ENCODE measurements at regions of chr1 and their contacts with region 1.

Region 1: GRCh38 chr1:941588-942383 is 17.3 kb downstream of the NOC2L start:
- DNase-seq: peak in 1 of 2 donors; percentile 85
- H3K4me3 ChIP-seq: peak overlapping the region; percentile 50 to 62
- H3K27ac ChIP-seq: peak overlapping the region; percentile 56 to 70
- H3K4me1 ChIP-seq: peaks cover 13 to 21% of the 10 kb centered on the region in 2 donors
- H3K27me3 ChIP-seq: peaks cover 12% of the 10 kb centered on the region
- CTCF ChIP-seq: no peak

Region 2: GRCh38 chr1:869499-870244 is 72.1 kb before region 1 on chr1:
- intact Hi-C with region 1: no loop called
- DNase-seq: peak in 1 of 2 donors; percentile 77
- H3K4me3 ChIP-seq: peak overlapping the region in 1 of 2 donors; percentile 39
- H3K27ac ChIP-seq: no peak overlapping the region
- H3K4me1 ChIP-seq: no peaks in the 10 kb centered on the region
- H3K27me3 ChIP-seq: no peaks in the 10 kb centered on the region
- CTCF ChIP-seq: peak; percentile 52 to 74 (median 62)

Region 3: DNA sequence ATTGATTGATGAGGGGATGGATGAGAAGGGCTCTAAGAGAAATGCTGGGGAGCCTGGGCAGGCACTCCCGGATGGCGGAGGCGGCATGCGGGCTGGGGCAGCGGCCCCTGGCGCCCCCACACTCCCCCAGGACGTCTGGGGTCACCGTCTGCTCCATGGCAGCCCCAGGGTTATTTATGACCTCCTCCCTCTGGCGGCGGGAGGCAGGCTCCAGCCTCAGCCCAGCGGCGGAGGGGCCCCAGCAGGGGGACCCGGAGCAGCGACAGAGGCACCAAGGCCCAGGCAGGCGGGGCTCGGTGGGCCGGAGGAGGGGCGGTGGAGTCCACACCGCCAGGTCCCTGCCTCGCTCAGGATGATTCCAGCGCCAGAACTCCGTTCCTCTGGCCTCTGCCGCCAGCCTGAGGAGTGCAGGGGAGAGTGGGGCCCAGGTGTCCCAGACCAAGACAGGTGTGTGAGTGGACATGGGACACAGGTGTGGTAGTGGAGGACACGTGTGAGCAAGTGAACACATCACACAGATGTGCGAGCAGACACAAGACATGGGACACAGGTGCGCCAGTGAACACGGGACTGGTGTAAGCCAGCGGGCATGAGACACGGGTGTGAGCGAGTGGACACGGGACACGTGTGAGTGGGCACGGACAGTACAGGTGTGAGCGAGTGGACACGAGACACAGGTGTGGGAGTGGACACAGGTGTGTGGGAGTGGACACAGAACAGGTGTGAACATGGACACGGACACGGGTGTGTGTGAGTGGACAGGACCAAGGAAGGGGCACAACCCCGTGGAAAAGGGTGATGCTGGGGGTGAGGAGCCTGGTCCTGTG is 20.6 kb before region 1 on chr1:
- intact Hi-C with region 1: loop called (anchors 1 kb)
- DNase-seq: peak in 1 of 2 donors; percentile 79
- H3K4me3 ChIP-seq: peak overlapping the region in 1 of 2 donors; percentile 28
- H3K27ac ChIP-seq: no peak overlapping the region
- H3K4me1 ChIP-seq: peaks cover 22 to 32% of the 10 kb centered on the region in 2 donors
- H3K27me3 ChIP-seq: peaks cover 2% of the 10 kb centered on the region
- CTCF ChIP-seq: peak; percentile 45 to 67 (median 61)

Region 4: GRCh38 chr1:1290238-1290731 is 348.5 kb after region 1 on chr1:
- intact Hi-C with region 1: no loop called
- DNase-seq: no peak
- H3K4me3 ChIP-seq: no peak overlapping the region
- H3K27ac ChIP-seq: no peak overlapping the region
- H3K4me1 ChIP-seq: peaks cover 3 to 4% of the 10 kb centered on the region in 2 donors
- H3K27me3 ChIP-seq: no peaks in the 10 kb centered on the region
- CTCF ChIP-seq: peak; percentile 60 to 70 (median 63)

Region 5: GRCh38 chr1:1399187-1399871 is 457.5 kb after region 1 on chr1 and contains the start of gene CCNL2:
- intact Hi-C with region 1: no loop called
- DNase-seq: peak; percentile 89 to 99
- H3K4me3 ChIP-seq: peak within 1 kb of the TSS; percentile 81 to 92
- H3K27ac ChIP-seq: peak within 1 kb of the TSS; percentile 75 to 80
- H3K4me1 ChIP-seq: peaks cover 10 to 24% of the 10 kb centered on the region in 2 donors
- H3K27me3 ChIP-seq: no peaks in the 10 kb centered on the region
- CTCF ChIP-seq: peak; percentile 64 to 77 (median 70)
- total RNA-seq, gene CCNL2: 150 TPM

Measured in ascending aorta (tissue), 2 donors.